ENCODE measurements at regions of chr14 and their contacts with region 1.

Region 1: DNA sequence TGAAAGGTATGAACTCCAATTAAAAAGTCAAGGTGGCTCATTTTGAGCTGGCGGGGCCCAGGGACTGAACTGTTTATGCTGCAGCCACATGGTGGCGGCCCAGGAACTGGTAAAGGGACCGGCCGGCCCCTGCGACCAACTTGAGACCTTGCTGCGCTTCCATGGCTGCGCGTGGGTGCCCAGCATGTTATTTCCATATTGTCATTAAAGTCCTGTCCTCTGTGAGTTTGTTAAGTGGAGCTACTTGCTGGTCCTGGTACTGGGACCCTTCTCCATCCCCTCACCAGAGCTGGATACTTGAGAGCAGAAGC is 62.3 kb downstream of the BEGAIN start:
- DNase-seq: no peak
- H3K4me3 ChIP-seq: no peak overlapping the region
- H3K27ac ChIP-seq: no peak overlapping the region
- H3K4me1 ChIP-seq: no peaks in the 10 kb centered on the region
- H3K27me3 ChIP-seq: no peaks in the 10 kb centered on the region
- CTCF ChIP-seq: no peak

Region 2: DNA sequence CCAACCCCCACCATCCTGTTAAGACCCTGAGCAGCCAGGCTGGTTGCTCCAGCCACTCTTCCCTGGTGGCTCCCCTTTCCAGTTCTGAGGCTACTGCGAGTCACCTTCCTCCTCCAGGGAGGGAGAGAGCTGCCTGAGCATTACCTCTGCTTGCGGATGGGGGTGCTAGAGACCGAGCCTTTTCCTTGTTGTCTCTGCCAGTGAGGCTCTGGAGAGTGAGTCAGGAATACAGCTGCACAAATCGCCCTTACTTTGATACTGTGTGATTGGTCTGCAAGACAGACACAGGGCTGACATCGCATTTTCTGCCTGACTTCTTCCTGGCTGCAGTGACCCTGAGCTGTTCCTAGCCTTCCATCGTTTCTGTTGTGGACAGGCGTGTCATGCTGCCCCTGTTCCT is 107.4 kb before region 1 on chr14:
- intact Hi-C with region 1: loop called (anchors 10 kb)
- DNase-seq: no peak
- H3K4me3 ChIP-seq: no peak overlapping the region
- H3K27ac ChIP-seq: no peak overlapping the region
- H3K4me1 ChIP-seq: no peaks in the 10 kb centered on the region
- H3K27me3 ChIP-seq: no peaks in the 10 kb centered on the region
- CTCF ChIP-seq: peak; percentile 42

Region 3: GRCh38 chr14:100486025-100486828 is 38.7 kb before region 1 on chr14:
- intact Hi-C with region 1: no loop called
- DNase-seq: peak; percentile 59
- H3K4me3 ChIP-seq: no peak overlapping the region
- H3K27ac ChIP-seq: no peak overlapping the region
- H3K4me1 ChIP-seq: no peaks in the 10 kb centered on the region
- H3K27me3 ChIP-seq: no peaks in the 10 kb centered on the region
- CTCF ChIP-seq: no peak

Measured in left ventricle myocardium inferior (tissue), 1 donor.